Gastrocnemius medialis (tissue), 4 donors: ENCODE measurements at regions of chr13 and their contacts with region 1.

Region 1: GRCh38 chr13:110116072-110116487 is 190.9 kb downstream of the COL4A1 start:
- DNase-seq: peak in 1 of 2 donors; percentile 63
- ATAC-seq: peak; percentile 38 to 40
- H3K4me3 ChIP-seq: no peak overlapping the region
- H3K27ac ChIP-seq: no peak overlapping the region
- H3K4me1 ChIP-seq: peaks cover 6 to 12% of the 10 kb centered on the region in 2 donors
- H3K27me3 ChIP-seq: peaks cover 0 to 2% (median 0%) of the 10 kb centered on the region in 3 donors
- CTCF ChIP-seq: peak; percentile 66 to 84 (median 78)
- POLR2A ChIP-seq: no peak

Region 2: DNA sequence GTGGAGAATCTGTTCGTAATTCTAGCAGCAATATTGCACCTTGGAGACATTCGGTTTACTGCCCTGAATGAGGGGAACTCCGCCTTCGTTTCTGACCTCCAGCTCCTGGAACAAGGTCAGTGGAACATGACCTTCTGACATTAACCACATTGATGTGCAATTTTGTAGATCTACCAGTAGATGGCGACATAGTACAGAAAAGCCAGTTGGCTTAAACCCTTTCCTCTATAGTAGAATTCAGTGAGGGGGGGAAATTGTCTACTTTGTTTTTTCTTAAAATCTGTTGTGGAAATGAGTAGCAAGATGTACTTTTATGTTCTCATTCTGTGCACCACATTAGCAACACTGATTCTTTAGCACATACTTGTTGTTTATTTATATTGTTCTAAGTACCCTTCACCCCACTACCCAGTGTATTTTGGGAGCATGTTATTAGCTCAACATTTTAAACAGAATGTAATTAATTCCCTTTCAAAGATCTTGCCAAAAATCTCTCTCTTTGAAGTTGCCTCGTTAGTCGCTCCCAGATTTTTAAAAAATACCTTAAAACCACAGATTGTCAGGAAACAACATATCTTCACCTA is 1154.4 kb before region 1 on chr13:
- in situ Hi-C with region 1: loop called (anchors 10 to 25 kb)
- intact Hi-C with region 1: no loop called
- DNase-seq: no peak
- ATAC-seq: peak; percentile 79 to 89
- H3K4me3 ChIP-seq: no peak overlapping the region
- H3K27ac ChIP-seq: no peak overlapping the region
- H3K4me1 ChIP-seq: no peaks in the 10 kb centered on the region
- H3K27me3 ChIP-seq: no peaks in the 10 kb centered on the region
- CTCF ChIP-seq: peak; percentile 58 to 87 (median 75)
- POLR2A ChIP-seq: no peak

Region 3: GRCh38 chr13:109145631-109146030 is 970.4 kb before region 1 on chr13:
- in situ Hi-C with region 1: loop called in 3 of 4 experiments (anchors 10 to 25 kb)
- intact Hi-C with region 1: no loop called
- DNase-seq: peak in 1 of 2 donors; percentile 10
- ATAC-seq: peak; percentile 80 to 83
- H3K4me3 ChIP-seq: no peak overlapping the region
- H3K27ac ChIP-seq: no peak overlapping the region
- H3K4me1 ChIP-seq: no peaks in the 10 kb centered on the region
- H3K27me3 ChIP-seq: peaks cover 6 to 14% (median 9%) of the 10 kb centered on the region in 3 donors
- CTCF ChIP-seq: peak; percentile 47 to 65 (median 61)
- POLR2A ChIP-seq: no peak

Region 4: GRCh38 chr13:109778102-109778542 is 338.0 kb before region 1 on chr13:
- in situ Hi-C with region 1: loop called (anchors 10 to 25 kb)
- intact Hi-C with region 1: no loop called
- DNase-seq: no peak
- ATAC-seq: peak; percentile 82 to 94
- H3K4me3 ChIP-seq: peak overlapping the region in 2 of 4 donors; percentile 52 to 54
- H3K27ac ChIP-seq: peak overlapping the region in 3 of 4 donors; percentile 29 to 53 (median 52)
- H3K4me1 ChIP-seq: peaks cover 58 to 62% of the 10 kb centered on the region in 2 donors
- H3K27me3 ChIP-seq: no peaks in the 10 kb centered on the region
- CTCF ChIP-seq: no peak
- POLR2A ChIP-seq: peak in 1 of 2 donors; percentile 50

Region 5: GRCh38 chr13:109938255-109938936 is 177.7 kb before region 1 on chr13:
- in situ Hi-C with region 1: loop called in 1 of 4 experiments (anchors 10 kb)
- intact Hi-C with region 1: no loop called
- DNase-seq: peak; percentile 40 to 71
- ATAC-seq: peak; percentile 95 to 98
- H3K4me3 ChIP-seq: no peak overlapping the region
- H3K27ac ChIP-seq: peak overlapping the region; percentile 65 to 81 (median 70)
- H3K4me1 ChIP-seq: peaks cover 11% of the 10 kb centered on the region in 2 donors
- H3K27me3 ChIP-seq: no peaks in the 10 kb centered on the region
- CTCF ChIP-seq: no peak
- POLR2A ChIP-seq: peak; percentile 12 to 53